Motor neuron (in vitro differentiated cells): ENCODE measurements at regions of chr21 and their contacts with region 1.

Region 1: DNA sequence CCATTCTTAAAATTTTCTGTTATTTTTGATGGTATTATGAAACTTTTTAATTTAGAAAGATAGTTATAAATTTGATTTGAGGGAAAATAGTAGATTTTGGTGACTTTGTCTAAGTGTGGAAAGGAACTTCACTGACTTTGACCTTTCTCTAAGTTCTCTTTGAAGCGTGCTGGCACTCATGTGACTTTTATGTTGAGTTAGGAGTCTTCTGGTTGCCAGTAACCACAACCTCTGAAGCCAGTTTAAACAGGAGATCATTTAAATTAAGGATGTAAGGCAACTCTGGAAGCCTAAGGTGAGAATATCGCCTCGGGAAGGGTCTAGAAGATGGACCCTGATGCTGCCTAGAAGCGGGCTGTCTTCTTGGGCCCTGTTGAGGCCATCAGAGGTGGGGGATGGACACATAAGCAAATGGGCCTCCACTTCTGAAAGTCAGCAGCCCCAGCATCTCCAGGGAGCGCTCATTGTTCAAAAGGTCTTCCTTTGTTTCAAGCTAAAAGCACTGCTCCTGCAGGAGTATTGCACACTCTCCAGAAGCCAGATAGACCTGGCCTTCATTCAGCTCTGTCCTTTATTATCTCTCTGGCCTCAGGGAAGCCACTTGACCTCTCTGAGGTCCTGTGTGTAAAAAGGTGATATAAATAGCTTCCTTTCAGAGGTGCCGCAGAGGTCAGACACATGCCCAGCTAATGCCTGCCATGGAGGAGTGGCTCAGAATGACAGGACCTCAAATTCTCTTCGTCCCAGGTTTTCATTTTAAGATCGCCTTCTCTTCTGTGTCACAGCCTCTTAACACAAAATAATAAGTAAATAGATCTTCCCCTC is 5.1 kb upstream of the RCAN1 start:
- ATAC-seq: no peak
- H3K4me3 ChIP-seq: no peak overlapping the region
- H3K27ac ChIP-seq: no peak overlapping the region
- H3K4me1 ChIP-seq: peaks cover 0 to 3% of the 10 kb centered on the region in 2 donors

Region 2: GRCh38 chr21:33924079-33924765 is 695.8 kb before region 1 on chr21:
- in situ Hi-C with region 1: loop called in 2 of 9 experiments (anchors 10 to 25 kb)
- ATAC-seq: peak; percentile 83 to 99 (median 98)
- H3K4me3 ChIP-seq: no peak overlapping the region
- H3K27ac ChIP-seq: no peak overlapping the region
- H3K4me1 ChIP-seq: no peaks in the 10 kb centered on the region

Region 3: GRCh38 chr21:34782506-34783365 is 162.7 kb after region 1 on chr21:
- in situ Hi-C with region 1: no loop called
- ATAC-seq: peak in 3 of 8 experiments; percentile 32 to 87 (median 62)
- H3K4me3 ChIP-seq: no peak overlapping the region
- H3K27ac ChIP-seq: no peak overlapping the region
- H3K4me1 ChIP-seq: no peaks in the 10 kb centered on the region